ENCODE measurements at regions of chr5 and their contacts with region 1.

Region 1: DNA sequence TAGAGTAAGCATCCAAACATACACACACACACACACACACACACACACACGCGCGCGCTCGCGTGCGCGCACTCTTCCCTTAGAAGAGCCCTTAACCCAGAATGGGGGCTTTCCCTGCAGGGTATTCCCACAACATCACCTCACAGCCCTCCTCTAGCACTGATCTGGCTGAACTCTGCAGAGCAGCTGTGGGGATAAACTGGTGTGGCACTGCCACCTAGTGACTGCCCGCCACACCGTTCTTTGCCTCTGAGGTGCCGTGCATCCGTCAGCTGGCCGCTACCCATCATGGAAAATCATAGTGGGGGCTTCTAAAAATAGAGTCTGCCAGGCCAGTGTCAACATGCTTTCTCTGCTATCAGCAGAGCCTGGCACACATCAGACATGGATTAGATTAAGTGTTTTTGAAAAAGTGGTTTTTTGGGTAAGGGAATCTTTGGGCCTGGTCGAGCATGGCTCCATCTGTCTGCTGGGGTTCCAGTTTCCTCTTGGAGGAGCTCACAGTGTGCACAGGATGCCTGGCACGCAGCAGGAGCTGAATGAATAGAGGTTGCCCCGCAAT is 88.1 kb downstream of the KCNN2 start:
- DNase-seq: no peak
- H3K4me3 ChIP-seq: no peak overlapping the region
- H3K27me3 ChIP-seq: no peaks in the 10 kb centered on the region
- CTCF ChIP-seq: peak; percentile 90

Region 2: GRCh38 chr5:113678924-113679575 is 770.9 kb before region 1 on chr5:
- CTCF ChIA-PET with region 1: interaction called, 12 read pairs
- POLR2A ChIA-PET with region 1: no interaction called
- DNase-seq: no peak
- H3K4me3 ChIP-seq: no peak overlapping the region
- H3K27me3 ChIP-seq: no peaks in the 10 kb centered on the region
- CTCF ChIP-seq: peak; percentile 76

Region 3: GRCh38 chr5:114101153-114101552 is 348.8 kb before region 1 on chr5:
- CTCF ChIA-PET with region 1: interaction called, 22 read pairs
- POLR2A ChIA-PET with region 1: no interaction called
- DNase-seq: no peak
- H3K4me3 ChIP-seq: no peak overlapping the region
- H3K27me3 ChIP-seq: no peaks in the 10 kb centered on the region
- CTCF ChIP-seq: peak; percentile 65

Region 4: GRCh38 chr5:114361724-114362196 is 88.2 kb before region 1 on chr5 and contains the start of gene KCNN2:
- CTCF ChIA-PET with region 1: interaction called, 104 read pairs
- POLR2A ChIA-PET with region 1: no interaction called
- DNase-seq: peak; percentile 59
- H3K4me3 ChIP-seq: peak within 1 kb of the TSS; percentile 62
- H3K27me3 ChIP-seq: no peaks in the 10 kb centered on the region; the same call in none of the 2 replicates
- CTCF ChIP-seq: no peak
- polyA plus RNA-seq, gene KCNN2: 4.6 and 5.1 TPM in 2 replicates

Region 5: GRCh38 chr5:114467729-114468128 is 17.8 kb after region 1 on chr5:
- CTCF ChIA-PET with region 1: interaction called, 13 read pairs
- POLR2A ChIA-PET with region 1: no interaction called
- DNase-seq: peak; percentile 19
- H3K4me3 ChIP-seq: no peak overlapping the region
- H3K27me3 ChIP-seq: no peaks in the 10 kb centered on the region
- CTCF ChIP-seq: no peak

Region 6: GRCh38 chr5:114634967-114635901 is 185.3 kb after region 1 on chr5:
- CTCF ChIA-PET with region 1: no interaction called
- POLR2A ChIA-PET with region 1: no interaction called
- DNase-seq: no peak
- H3K4me3 ChIP-seq: no peak overlapping the region
- H3K27me3 ChIP-seq: no peaks in the 10 kb centered on the region
- CTCF ChIP-seq: no peak